GM12878 (cell line): ENCODE measurements at regions of chr11 and their contacts with region 1.

Region 1: GRCh38 chr11:122863704-122864326 is 18.7 kb upstream of the JHY start:
- DNase-seq: no peak
- ATAC-seq: peak; percentile 68
- H3K4me3 ChIP-seq: no peak overlapping the region
- H3K27ac ChIP-seq: no peak overlapping the region
- H3K4me1 ChIP-seq: peaks cover 3% of the 10 kb centered on the region
- H3K27me3 ChIP-seq: peaks cover 0 to 3% of the 10 kb centered on the region in 2 experiments; a peak in 1 of 4 replicates
- CTCF ChIP-seq: peak; percentile 82 to 83 (median 82)
- EP300 ChIP-seq: no peak
- POLR2A ChIP-seq: no peak
- RAD21 ChIP-seq: peak; percentile 92

Region 2: DNA sequence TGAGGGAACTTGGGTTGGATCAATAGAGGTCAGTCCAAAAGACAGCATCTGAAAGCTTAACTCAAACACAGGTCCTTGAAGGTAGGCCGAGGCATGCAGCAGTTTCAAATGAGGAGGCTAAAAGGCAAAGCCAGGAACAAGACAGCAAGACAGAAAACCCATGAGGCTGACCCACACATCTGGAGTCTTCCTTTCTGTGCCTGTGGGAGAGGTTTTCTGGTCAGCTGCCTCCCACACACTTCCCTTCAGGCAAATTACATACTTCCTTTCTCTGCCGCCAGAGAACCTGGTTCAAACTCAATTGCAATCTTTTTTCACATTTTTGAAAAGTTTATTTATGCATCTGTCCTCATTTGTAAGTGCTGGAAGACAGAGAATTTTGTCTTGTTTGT is 55.3 kb before region 1 on chr11:
- CTCF ChIA-PET with region 1: interaction called, 190 read pairs
- POLR2A ChIA-PET with region 1: no interaction called
- RAD21 ChIA-PET with region 1: interaction called, 175 read pairs
- SMC1A ChIA-PET with region 1: interaction called, 7 read pairs
- in situ Hi-C with region 1: no loop called
- intact Hi-C with region 1: no loop called
- DNase-seq: peak; percentile 66
- ATAC-seq: peak; percentile 81
- H3K4me3 ChIP-seq: no peak overlapping the region
- H3K27ac ChIP-seq: peak overlapping the region; percentile 47; the same call in 1 of the 2 replicates
- H3K4me1 ChIP-seq: peaks cover 18% of the 10 kb centered on the region
- H3K27me3 ChIP-seq: no peaks in the 10 kb centered on the region
- CTCF ChIP-seq: no peak
- EP300 ChIP-seq: no peak
- POLR2A ChIP-seq: no peak
- RAD21 ChIP-seq: no peak

Region 3: DNA sequence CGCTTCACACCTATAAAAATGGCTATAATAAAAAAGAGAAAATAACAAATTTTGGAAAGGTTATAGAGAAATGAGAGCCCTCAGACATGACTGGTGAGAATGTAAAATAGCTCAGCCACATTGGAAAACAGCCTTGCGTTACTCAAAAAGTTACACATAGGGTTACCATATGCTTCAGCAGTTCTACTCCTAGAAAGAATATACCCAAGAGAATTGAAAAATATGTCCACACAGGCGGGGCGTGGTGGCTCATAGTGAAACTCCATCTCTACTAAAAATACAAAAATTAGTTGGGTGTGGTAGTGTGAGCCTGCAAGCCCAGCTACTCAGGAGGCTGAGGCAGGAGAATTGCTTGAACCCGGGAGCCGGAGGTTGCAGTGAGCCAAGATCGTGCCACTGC is 11.2 kb after region 1 on chr11:
- CTCF ChIA-PET with region 1: interaction called, 101 read pairs
- POLR2A ChIA-PET with region 1: interaction called, 17 read pairs
- RAD21 ChIA-PET with region 1: interaction called, 48 read pairs
- SMC1A ChIA-PET with region 1: interaction called, 466 read pairs
- in situ Hi-C with region 1: no loop called
- intact Hi-C with region 1: no loop called
- DNase-seq: peak; percentile 52
- ATAC-seq: peak; percentile 79
- H3K4me3 ChIP-seq: 0 out of 2 replicates have a peak overlapping the region, but pooled peaks have one; percentile 25
- H3K27ac ChIP-seq: no peak overlapping the region
- H3K4me1 ChIP-seq: peaks cover 3% of the 10 kb centered on the region; the same call in 1 of the 2 replicates
- H3K27me3 ChIP-seq: no peaks in the 10 kb centered on the region
- CTCF ChIP-seq: no peak
- EP300 ChIP-seq: no peak
- POLR2A ChIP-seq: no peak
- RAD21 ChIP-seq: no peak

Region 4: DNA sequence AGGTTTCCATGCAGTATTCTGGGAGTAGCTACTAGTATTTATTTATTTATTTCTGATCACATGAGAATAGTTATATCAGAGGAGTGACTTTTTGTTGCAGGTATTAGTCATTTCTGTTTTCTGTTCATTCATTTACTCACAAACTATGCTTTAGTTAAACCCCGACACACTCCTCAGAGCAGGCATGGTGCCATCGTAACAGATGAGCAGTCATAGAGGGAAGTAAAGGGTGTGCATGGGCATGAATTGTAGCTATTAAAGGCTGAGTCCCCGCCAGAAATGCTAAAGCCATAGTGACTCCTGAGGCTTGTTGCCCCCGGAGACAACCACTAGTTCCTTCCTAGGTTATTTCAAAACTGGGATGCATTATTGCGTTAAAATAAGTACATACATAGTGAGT is 29.3 kb after region 1 on chr11:
- CTCF ChIA-PET with region 1: interaction called, 10 read pairs
- POLR2A ChIA-PET with region 1: interaction called, 3 read pairs
- RAD21 ChIA-PET with region 1: interaction called, 8 read pairs
- SMC1A ChIA-PET with region 1: interaction called, 146 read pairs
- in situ Hi-C with region 1: no loop called
- intact Hi-C with region 1: no loop called
- DNase-seq: no peak
- ATAC-seq: peak; percentile 90
- H3K4me3 ChIP-seq: no peak overlapping the region
- H3K27ac ChIP-seq: no peak overlapping the region
- H3K4me1 ChIP-seq: no peaks in the 10 kb centered on the region
- H3K27me3 ChIP-seq: no peaks in the 10 kb centered on the region
- CTCF ChIP-seq: no peak
- EP300 ChIP-seq: no peak
- POLR2A ChIP-seq: no peak
- RAD21 ChIP-seq: no peak

Region 5: DNA sequence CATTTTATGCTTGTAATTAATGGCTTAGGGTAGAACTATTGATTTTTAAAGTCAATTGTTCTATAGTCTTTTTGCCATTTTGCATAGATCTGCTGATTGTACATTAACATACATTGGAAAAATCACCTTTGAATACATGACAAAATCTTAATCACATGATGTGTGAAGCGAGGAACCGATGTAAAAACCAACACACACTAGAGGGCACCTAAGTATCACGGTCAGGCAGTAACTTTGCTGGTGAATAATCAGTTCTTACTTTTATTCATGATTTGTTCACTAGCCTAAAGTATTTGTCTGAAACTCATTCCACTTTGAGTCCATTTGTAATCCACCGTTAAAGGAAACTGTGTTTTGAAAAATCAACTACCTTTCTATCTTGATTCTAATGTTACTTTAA is 47.0 kb after region 1 on chr11:
- CTCF ChIA-PET with region 1: interaction called, 12 read pairs
- POLR2A ChIA-PET with region 1: interaction called, 3 read pairs
- RAD21 ChIA-PET with region 1: interaction called, 5 read pairs
- SMC1A ChIA-PET with region 1: interaction called, 10 read pairs
- in situ Hi-C with region 1: no loop called
- intact Hi-C with region 1: no loop called
- DNase-seq: no peak
- ATAC-seq: peak; percentile 70
- H3K4me3 ChIP-seq: no peak overlapping the region
- H3K27ac ChIP-seq: no peak overlapping the region
- H3K4me1 ChIP-seq: no peaks in the 10 kb centered on the region
- H3K27me3 ChIP-seq: no peaks in the 10 kb centered on the region
- CTCF ChIP-seq: peak; percentile 8 to 52 (median 14); a peak in 3 of 6 replicates
- EP300 ChIP-seq: no peak
- POLR2A ChIP-seq: no peak
- RAD21 ChIP-seq: peak; percentile 55

Region 6: GRCh38 chr11:123054301-123055065 is 190.7 kb after region 1 on chr11:
- CTCF ChIA-PET with region 1: interaction called, 387 read pairs
- POLR2A ChIA-PET with region 1: interaction called, 7 read pairs
- RAD21 ChIA-PET with region 1: interaction called, 122 read pairs
- SMC1A ChIA-PET with region 1: interaction called, 159 read pairs
- in situ Hi-C with region 1: no loop called
- intact Hi-C with region 1: loop called (anchors 1 kb)
- DNase-seq: no peak
- ATAC-seq: peak; percentile 87
- H3K4me3 ChIP-seq: no peak overlapping the region
- H3K27ac ChIP-seq: no peak overlapping the region
- H3K4me1 ChIP-seq: no peaks in the 10 kb centered on the region; the same call in 1 of the 2 replicates
- H3K27me3 ChIP-seq: no peaks in the 10 kb centered on the region
- CTCF ChIP-seq: peak; percentile 61 to 74 (median 63)
- EP300 ChIP-seq: no peak
- POLR2A ChIP-seq: no peak
- RAD21 ChIP-seq: peak; percentile 58